AG04449 (cell line): ENCODE measurements at regions of chr1 and their contacts with region 1.

Region 1: GRCh38 chr1:36576118-36576517 is 93.4 kb upstream of the CSF3R start:
- DNase-seq: no peak
- H3K4me3 ChIP-seq: no peak overlapping the region
- CTCF ChIP-seq: peak; percentile 79

Region 2: DNA sequence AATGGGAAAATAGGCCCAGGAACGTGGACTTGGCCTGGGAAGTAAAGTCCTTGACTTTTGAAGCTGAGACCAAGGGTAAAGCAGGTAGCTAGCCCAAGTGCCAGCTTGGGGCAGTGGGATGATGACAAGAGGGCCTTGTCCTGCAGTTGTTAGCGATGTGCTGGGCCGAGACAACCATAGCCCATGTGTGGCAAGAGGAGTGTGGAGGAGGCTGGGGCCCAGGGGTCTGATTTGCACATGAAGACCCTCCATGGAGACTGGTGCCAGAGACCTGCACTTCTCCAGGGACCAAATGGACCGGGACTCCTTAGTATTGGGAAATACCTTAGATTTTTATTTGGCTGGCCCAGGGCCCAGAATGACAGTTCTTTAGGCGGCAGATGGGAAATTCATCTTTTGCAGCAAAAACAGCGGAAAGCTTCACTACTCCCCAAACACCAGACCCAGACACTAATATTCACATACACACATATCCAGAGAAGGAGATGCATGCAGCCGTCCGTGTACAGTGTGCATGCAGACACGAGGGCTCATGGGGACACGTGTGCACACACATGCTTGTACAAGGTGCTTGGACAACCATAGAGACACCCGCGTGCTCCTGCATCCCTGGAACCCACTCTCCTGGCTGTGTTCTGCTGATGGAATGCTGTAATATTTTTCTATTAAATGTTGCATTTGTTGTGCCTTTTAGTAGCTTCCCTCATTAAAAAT is 15.3 kb before region 1 on chr1:
- CTCF ChIA-PET with region 1: interaction called, 14 read pairs
- POLR2A ChIA-PET with region 1: no interaction called
- DNase-seq: no peak
- H3K4me3 ChIP-seq: no peak overlapping the region
- CTCF ChIP-seq: no peak

Region 3: GRCh38 chr1:37434292-37434907 is 858.3 kb after region 1 on chr1:
- CTCF ChIA-PET with region 1: interaction called, 37 read pairs
- POLR2A ChIA-PET with region 1: no interaction called
- DNase-seq: no peak
- H3K4me3 ChIP-seq: no peak overlapping the region
- CTCF ChIP-seq: peak; percentile 97